AG04449 (cell line): ENCODE measurements at regions of chr4 and their contacts with region 1.

Region 1: GRCh38 chr4:74874753-74875367 is 58.1 kb upstream of the PARM1 start:
- DNase-seq: peak; percentile 29
- H3K4me3 ChIP-seq: no peak overlapping the region
- CTCF ChIP-seq: peak; percentile 78

Region 2: DNA sequence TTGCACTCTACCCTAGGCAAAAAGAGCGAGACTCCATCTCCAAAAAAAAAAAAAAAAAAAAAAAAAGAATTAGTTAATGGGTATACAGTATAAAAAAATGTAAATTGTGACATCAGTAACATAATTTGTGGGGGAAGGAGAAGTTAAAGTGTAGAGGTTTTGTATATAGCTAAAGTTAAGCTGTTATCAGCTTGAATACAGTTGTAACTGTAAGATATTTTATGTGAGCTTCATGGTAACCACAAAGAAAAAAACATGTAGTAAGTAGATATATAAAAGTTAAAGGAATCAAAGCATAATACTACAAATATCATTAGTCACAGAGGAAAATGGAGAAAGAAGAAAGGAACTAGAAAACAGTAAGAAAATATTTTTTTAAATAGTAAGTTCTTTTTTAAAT is 619.8 kb before region 1 on chr4:
- CTCF ChIA-PET with region 1: no interaction called
- POLR2A ChIA-PET with region 1: no interaction called
- DNase-seq: no peak
- H3K4me3 ChIP-seq: no peak overlapping the region
- CTCF ChIP-seq: no peak

Region 3: DNA sequence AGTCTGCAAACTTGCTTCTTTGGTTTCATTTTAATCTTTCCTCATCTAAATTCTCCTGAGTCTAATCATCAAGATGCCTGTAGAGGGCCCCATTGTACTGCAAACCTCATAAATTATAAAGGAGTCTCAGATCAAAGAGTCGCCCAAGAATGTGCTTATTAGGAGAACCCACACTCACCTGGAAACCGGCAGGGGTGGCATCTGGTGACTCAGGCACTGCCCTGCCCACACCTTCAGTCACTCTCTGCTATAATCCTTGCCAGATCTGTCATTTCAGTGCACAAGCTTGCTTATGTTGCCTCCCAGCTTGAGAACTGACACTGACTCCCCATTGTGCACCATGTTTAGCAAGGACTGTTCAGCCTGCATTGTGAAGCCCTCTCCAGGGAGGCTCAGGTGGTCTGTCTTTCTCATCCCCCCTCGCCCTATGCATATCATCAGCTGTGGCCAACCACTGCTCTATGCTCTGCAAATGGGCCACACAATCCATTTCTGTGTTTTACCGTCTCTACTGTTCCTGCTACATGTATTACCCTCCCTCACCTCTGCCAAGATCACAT is 554.2 kb before region 1 on chr4:
- CTCF ChIA-PET with region 1: interaction called, 14 read pairs
- POLR2A ChIA-PET with region 1: no interaction called
- DNase-seq: no peak
- H3K4me3 ChIP-seq: no peak overlapping the region; the same call in 1 of the 2 replicates
- CTCF ChIP-seq: peak; percentile 19

Region 4: GRCh38 chr4:74845834-74846233 is 29.0 kb before region 1 on chr4:
- CTCF ChIA-PET with region 1: no interaction called
- POLR2A ChIA-PET with region 1: no interaction called
- DNase-seq: no peak
- H3K4me3 ChIP-seq: no peak overlapping the region
- CTCF ChIP-seq: no peak